ENCODE measurements at regions of chr18 and their contacts with region 1.

Region 1: GRCh38 chr18:39966275-39966674 is 1988.8 kb upstream of the PIK3C3 start:
- DNase-seq: peak; percentile 21 to 54
- H3K4me3 ChIP-seq: no peak overlapping the region
- H3K27ac ChIP-seq: no peak overlapping the region
- H3K4me1 ChIP-seq: peaks cover 0 to 3% (median 0%) of the 10 kb centered on the region in 4 experiments; a peak in 2 of 7 replicates
- H3K27me3 ChIP-seq: no peaks in the 10 kb centered on the region
- CTCF ChIP-seq: peak in 2 of 3 experiments; percentile 28 to 67; a peak in 2 of 4 replicates
- EP300 ChIP-seq: no peak
- POLR2A ChIP-seq: no peak
- RAD21 ChIP-seq: peak; percentile 68 to 73

Region 2: GRCh38 chr18:39976771-39977170 is 10.5 kb after region 1 on chr18:
- CTCF ChIA-PET with region 1: interaction called, 10 read pairs
- POLR2A ChIA-PET with region 1: no interaction called
- DNase-seq: no peak
- H3K4me3 ChIP-seq: no peak overlapping the region
- H3K27ac ChIP-seq: no peak overlapping the region
- H3K4me1 ChIP-seq: no peaks in the 10 kb centered on the region
- H3K27me3 ChIP-seq: no peaks in the 10 kb centered on the region
- CTCF ChIP-seq: no peak
- EP300 ChIP-seq: no peak
- POLR2A ChIP-seq: no peak
- RAD21 ChIP-seq: no peak

Region 3: GRCh38 chr18:40501026-40501425 is 534.8 kb after region 1 on chr18:
- CTCF ChIA-PET with region 1: no interaction called
- POLR2A ChIA-PET with region 1: no interaction called
- DNase-seq: no peak
- H3K4me3 ChIP-seq: no peak overlapping the region
- H3K27ac ChIP-seq: no peak overlapping the region
- H3K4me1 ChIP-seq: no peaks in the 10 kb centered on the region
- H3K27me3 ChIP-seq: no peaks in the 10 kb centered on the region
- CTCF ChIP-seq: no peak
- EP300 ChIP-seq: no peak
- POLR2A ChIP-seq: no peak
- RAD21 ChIP-seq: no peak

Measured in H1 (cell line).